Activated naive CD4-positive, alpha-beta T cell treated with anti-CD3 and anti-CD28 coated beads for 36 hours (primary cell): ENCODE measurements at regions of chr6 and their contacts with region 1.

Region 1: DNA sequence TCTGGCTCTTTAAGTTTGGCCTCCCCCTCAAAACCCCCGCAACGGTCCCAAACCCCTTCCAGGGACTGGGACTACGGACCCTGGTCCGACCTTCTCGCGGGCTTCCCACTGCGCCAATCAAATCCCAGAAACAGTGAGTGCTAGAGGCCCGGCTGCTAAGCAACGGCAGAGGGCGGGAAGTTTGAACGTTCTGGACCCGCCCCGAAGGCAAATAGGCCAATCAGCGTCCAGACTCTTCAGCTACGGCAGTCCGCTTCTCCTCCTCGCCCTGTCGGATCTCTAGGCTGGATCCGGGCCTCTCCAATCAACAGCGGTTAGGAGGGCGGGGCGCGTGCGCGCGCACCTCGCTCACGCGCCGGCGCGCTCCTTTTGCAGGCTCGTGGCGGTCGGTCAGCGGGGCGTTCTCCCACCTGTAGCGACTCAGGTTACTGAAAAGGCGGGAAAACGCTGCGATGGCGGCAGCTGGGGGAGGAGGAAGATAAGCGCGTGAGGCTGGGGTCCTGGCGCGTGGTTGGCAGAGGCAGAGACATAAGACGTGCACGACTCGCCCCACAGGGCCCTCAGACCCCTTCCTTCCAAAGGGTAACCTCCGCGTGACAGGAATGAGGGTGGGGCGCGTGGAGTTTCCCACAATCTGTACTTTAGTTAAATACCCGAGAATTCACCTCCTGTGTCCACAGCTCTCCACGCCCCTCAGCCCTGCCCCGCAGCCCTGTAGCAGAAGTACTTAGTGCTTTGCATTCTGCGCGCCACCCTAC is at the start of gene MSH5:
- DNase-seq: peak; percentile 99
- H3K4me3 Mint-ChIP-seq: peak within 1 kb of the TSS; percentile 95
- H3K27ac Mint-ChIP-seq: peak within 1 kb of the TSS; percentile 93
- H3K4me1 Mint-ChIP-seq: peaks cover 45% of the 10 kb centered on the region
- H3K27me3 Mint-ChIP-seq: no peaks in the 10 kb centered on the region
- total RNA-seq, gene MSH5: 101 to 105 TPM

Region 2: DNA sequence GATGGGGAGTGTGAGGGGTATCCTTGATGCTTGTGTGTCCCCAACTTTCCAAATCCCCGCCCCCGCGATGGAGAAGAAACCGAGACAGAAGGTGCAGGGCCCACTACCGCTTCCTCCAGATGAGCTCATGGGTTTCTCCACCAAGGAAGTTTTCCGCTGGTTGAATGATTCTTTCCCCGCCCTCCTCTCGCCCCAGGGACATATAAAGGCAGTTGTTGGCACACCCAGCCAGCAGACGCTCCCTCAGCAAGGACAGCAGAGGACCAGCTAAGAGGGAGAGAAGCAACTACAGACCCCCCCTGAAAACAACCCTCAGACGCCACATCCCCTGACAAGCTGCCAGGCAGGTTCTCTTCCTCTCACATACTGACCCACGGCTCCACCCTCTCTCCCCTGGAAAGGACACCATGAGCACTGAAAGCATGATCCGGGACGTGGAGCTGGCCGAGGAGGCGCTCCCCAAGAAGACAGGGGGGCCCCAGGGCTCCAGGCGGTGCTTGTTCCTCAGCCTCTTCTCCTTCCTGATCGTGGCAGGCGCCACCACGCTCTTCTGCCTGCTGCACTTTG is 164.4 kb before region 1 on chr6 and contains the start of gene TNF:
- CTCF ChIA-PET with region 1: no interaction called
- intact Hi-C with region 1: loop called (anchors 5 kb)
- DNase-seq: peak; percentile 87
- H3K4me3 Mint-ChIP-seq: peak within 1 kb of the TSS; percentile 94
- H3K27ac Mint-ChIP-seq: peak within 1 kb of the TSS; percentile 97
- H3K4me1 Mint-ChIP-seq: peaks cover 65% of the 10 kb centered on the region
- H3K27me3 Mint-ChIP-seq: no peaks in the 10 kb centered on the region
- total RNA-seq, gene TNF: 31.6 to 33.2 TPM

Region 3: DNA sequence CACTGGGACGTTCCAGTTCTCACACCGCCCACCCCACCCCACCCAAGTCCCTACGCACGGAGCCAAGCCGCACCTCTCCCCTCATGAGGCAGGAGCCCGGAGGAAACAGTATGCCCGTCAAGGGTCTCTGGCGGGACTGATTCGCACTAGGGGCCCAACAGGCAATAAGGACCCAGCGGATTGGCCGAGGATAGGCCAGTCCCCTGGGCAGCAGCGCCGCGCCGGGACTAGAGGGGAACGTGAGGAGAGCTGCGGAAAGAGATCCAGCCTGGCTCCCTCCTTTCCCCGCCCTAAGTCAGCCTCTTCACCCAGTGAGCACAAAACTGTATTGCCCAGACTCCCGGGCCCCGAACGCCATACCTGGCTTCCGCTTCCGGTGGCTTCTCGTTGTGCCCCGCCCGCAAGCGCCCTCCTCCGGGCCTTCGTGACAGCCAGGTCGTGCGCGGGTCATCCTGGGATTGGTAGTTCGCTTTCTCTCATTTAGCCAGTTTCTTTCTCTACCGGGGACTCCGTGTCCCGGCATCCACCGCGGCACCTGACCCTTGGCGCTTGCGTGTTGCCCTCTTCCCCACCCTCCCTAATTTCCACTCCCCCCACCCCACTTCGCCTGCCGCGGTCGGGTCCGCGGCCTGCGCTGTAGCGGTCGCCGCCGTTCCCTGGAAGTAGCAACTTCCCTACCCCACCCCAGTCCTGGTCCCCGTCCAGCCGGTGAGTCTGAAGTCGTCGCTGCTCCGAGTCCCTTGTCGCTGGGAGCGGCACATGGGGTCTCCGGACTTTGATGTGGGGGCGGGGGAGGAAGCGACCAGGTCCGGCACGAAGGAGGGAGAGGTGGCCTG is 74.1 kb before region 1 on chr6 and contains the start of gene CSNK2B:
- CTCF ChIA-PET with region 1: interaction called, 3 read pairs
- intact Hi-C with region 1: loop called (anchors 1 kb)
- DNase-seq: peak; percentile 99
- H3K4me3 Mint-ChIP-seq: peak within 1 kb of the TSS; percentile 95
- H3K27ac Mint-ChIP-seq: peak within 1 kb of the TSS; percentile 97
- H3K4me1 Mint-ChIP-seq: peaks cover 62% of the 10 kb centered on the region
- H3K27me3 Mint-ChIP-seq: no peaks in the 10 kb centered on the region
- total RNA-seq, gene CSNK2B: 215 to 219 TPM

Region 4: GRCh38 chr6:31692353-31692752 is 47.5 kb before region 1 on chr6:
- CTCF ChIA-PET with region 1: no interaction called
- intact Hi-C with region 1: no loop called
- DNase-seq: no peak
- H3K4me3 Mint-ChIP-seq: no peak overlapping the region
- H3K27ac Mint-ChIP-seq: no peak overlapping the region
- H3K4me1 Mint-ChIP-seq: peaks cover 5% of the 10 kb centered on the region
- H3K27me3 Mint-ChIP-seq: no peaks in the 10 kb centered on the region

Region 5: DNA sequence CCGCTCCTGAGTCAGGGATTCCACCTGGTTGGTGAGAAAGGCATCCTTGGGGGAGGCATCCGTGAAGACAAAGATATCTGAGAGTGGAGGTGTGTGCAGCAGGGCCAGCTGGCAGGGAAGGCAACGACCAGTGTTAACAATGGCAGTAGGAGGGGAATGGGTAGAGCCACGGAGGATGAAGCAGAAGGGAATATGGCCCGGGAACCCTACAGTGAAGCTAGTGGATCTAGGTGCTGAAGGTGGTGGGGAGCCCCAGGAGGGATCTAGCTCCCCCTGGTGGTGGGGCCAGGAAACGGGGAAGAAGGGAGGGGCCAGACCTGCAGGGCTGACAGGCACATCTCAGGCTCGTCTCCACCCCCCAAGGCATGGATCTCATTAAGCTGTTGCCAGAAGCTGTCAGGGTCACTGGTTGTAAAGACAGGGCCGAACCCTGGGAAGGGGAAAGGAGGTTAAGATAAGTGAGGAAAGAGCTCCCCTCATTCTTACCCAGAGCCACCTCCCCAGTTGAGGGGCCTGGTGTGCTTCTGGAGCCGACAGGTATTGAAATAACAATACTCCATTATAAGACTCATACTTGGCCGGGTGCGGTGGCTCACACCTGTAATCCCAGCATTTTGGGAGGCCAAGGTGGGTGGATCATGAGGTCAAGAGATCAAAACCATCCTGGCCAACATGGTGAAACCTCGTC is 30.0 kb after region 1 on chr6:
- CTCF ChIA-PET with region 1: interaction called, 11 read pairs
- intact Hi-C with region 1: loop called (anchors 2 kb)
- DNase-seq: peak; percentile 86
- H3K4me3 Mint-ChIP-seq: no peak overlapping the region
- H3K27ac Mint-ChIP-seq: no peak overlapping the region
- H3K4me1 Mint-ChIP-seq: peaks cover 27% of the 10 kb centered on the region
- H3K27me3 Mint-ChIP-seq: no peaks in the 10 kb centered on the region

Region 6: GRCh38 chr6:31827286-31828079 is 87.7 kb after region 1 on chr6 and contains the start of gene HSPA1B:
- CTCF ChIA-PET with region 1: interaction called, 6 read pairs
- intact Hi-C with region 1: loop called (anchors 1 kb)
- DNase-seq: peak; percentile 98
- H3K4me3 Mint-ChIP-seq: peak within 1 kb of the TSS; percentile 85
- H3K27ac Mint-ChIP-seq: peak within 1 kb of the TSS; percentile 97
- H3K4me1 Mint-ChIP-seq: peaks cover 46% of the 10 kb centered on the region
- H3K27me3 Mint-ChIP-seq: no peaks in the 10 kb centered on the region
- total RNA-seq, gene HSPA1B: 47.8 to 50.1 TPM

Region 7: GRCh38 chr6:31958741-31959739 is 219.2 kb after region 1 on chr6 and contains the starts of genes NELFE and SKIC2:
- CTCF ChIA-PET with region 1: no interaction called
- intact Hi-C with region 1: no loop called
- DNase-seq: peak; percentile 99
- H3K4me3 Mint-ChIP-seq: peak within 1 kb of the TSS; percentile 95
- H3K27ac Mint-ChIP-seq: peak within 1 kb of the TSS; percentile 94
- H3K4me1 Mint-ChIP-seq: peaks cover 41% of the 10 kb centered on the region
- H3K27me3 Mint-ChIP-seq: no peaks in the 10 kb centered on the region
- total RNA-seq, gene NELFE: 83.2 to 87.4 TPM
- total RNA-seq, gene SKIC2: 93.6 to 101 TPM

Region 8: DNA sequence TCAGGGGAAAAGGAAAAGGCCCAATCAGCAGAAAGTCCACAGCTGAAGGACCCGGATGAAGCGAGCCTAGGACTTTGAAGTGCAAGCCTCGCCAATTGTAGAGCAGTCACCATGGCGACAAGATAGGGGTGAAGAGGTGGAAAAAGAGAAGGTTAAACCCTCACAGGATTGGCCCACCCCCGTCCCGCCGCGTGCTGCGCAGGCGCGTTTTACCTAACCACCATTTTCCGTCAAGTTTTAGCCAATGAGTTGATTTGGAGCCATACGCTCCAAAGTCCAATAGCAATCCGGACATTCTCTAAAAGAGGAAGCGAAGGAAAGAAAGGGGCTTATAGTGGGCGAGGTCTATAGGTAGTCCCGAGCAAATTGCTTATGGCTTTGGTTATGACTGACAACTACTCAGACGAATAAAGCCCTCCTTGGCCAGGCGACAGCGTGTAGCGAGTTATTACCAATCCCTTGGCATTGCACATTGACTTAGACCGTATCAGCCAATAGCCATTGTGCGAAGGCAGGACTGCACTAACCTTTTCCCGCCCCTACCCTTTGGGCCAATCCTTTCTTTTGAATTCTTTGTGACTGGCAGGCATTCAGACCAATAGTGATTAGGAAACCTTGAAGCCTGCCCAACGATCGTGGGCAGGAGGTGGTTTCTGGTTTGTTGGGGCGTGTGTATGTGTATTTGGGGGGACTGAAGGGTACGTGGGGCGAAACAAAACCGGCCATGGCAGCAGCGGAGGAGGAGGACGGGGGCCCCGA is 438.1 kb after region 1 on chr6 and contains the start of gene RNF5:
- CTCF ChIA-PET with region 1: no interaction called
- intact Hi-C with region 1: loop called (anchors 2 kb)
- DNase-seq: peak; percentile 97
- H3K4me3 Mint-ChIP-seq: peak within 1 kb of the TSS; percentile 91
- H3K27ac Mint-ChIP-seq: peak within 1 kb of the TSS; percentile 96
- H3K4me1 Mint-ChIP-seq: peaks cover 61% of the 10 kb centered on the region
- H3K27me3 Mint-ChIP-seq: no peaks in the 10 kb centered on the region
- total RNA-seq, gene RNF5: 39.5 to 39.9 TPM